ENCODE measurements at regions of chr20 and their contacts with region 1.

Region 1: DNA sequence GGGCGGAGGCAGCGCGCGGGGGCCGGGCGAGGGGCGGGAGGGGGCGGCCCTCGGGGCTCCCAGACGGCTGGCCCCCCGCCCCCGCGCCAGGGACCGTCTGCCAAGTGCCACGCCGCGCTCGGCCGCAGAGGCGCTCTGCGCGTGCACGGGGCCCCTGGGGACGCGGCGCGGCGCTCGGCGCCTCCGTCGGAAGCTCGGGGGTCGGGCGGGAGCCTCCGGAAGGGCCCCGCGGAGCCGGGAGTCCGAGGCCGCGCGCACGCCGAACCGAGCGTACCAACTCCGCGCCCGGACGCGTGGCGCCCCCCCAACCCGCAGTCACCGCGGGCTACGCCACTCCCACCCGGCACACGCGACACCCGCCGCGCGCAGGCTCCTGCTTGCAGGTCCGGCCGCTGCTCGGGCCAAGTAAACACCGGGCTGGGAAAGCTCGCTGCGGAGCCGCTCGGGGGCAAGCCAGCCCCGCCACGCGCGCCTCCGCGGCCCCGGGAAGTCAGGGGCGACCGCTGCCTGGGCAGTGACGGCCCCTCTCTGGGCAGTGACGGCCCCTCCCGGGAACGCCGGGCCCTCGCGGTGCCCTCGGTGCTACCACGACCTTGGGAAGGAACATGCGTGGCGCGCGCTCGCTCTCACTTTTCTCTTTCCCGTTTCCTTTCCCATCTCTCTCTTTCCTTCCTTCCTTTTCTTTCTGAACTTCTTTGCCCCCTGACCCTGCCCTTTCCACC is 384 bp upstream of the PREX1 start:
- DNase-seq: peak; percentile 26 to 83 (median 57)
- ATAC-seq: peak; percentile 88
- H3K4me3 ChIP-seq: peak overlapping the region; percentile 38
- H3K4me3 Mint-ChIP-seq: peak overlapping the region; percentile 75 to 87 (median 81)
- H3K27ac ChIP-seq: no peak overlapping the region
- H3K27ac Mint-ChIP-seq: peak overlapping the region in 8 of 9 donors; percentile 39 to 82 (median 64)
- H3K4me1 ChIP-seq: peaks cover 23 to 25% of the 10 kb centered on the region in 2 donors
- H3K4me1 Mint-ChIP-seq: peaks cover 16 to 42% (median 35%) of the 10 kb centered on the region in 7 donors
- H3K27me3 ChIP-seq: no peaks in the 10 kb centered on the region
- H3K27me3 Mint-ChIP-seq: peaks cover 4 to 21% (median 11%) of the 10 kb centered on the region in 5 donors

Region 2: GRCh38 chr20:48657475-48658470 is 170.4 kb before region 1 on chr20:
- CTCF ChIA-PET with region 1: no interaction called
- POLR2A ChIA-PET with region 1: no interaction called
- intact Hi-C with region 1: loop called (anchors 2 to 5 kb)
- DNase-seq: peak; percentile 33 to 73 (median 61)
- ATAC-seq: peak; percentile 94
- H3K4me3 ChIP-seq: no peak overlapping the region
- H3K4me3 Mint-ChIP-seq: no peak overlapping the region
- H3K27ac ChIP-seq: no peak overlapping the region
- H3K27ac Mint-ChIP-seq: peak overlapping the region in 2 of 9 donors; percentile 19 to 52
- H3K4me1 ChIP-seq: peaks cover 0 to 3% of the 10 kb centered on the region in 2 donors
- H3K4me1 Mint-ChIP-seq: peaks cover 0 to 10% (median 3%) of the 10 kb centered on the region in 7 donors
- H3K27me3 ChIP-seq: no peaks in the 10 kb centered on the region
- H3K27me3 Mint-ChIP-seq: no peaks in the 10 kb centered on the region

Region 3: GRCh38 chr20:48760403-48760983 is 67.7 kb before region 1 on chr20:
- CTCF ChIA-PET with region 1: no interaction called
- POLR2A ChIA-PET with region 1: interaction called, 3 read pairs
- intact Hi-C with region 1: loop called (anchors 1 to 2 kb)
- DNase-seq: peak in 8 of 9 donors; percentile 21 to 74 (median 62)
- ATAC-seq: peak; percentile 85
- H3K4me3 ChIP-seq: peak overlapping the region; percentile 48
- H3K4me3 Mint-ChIP-seq: peak overlapping the region in 9 of 10 donors; percentile 54 to 81 (median 70)
- H3K27ac ChIP-seq: peak overlapping the region; percentile 57
- H3K27ac Mint-ChIP-seq: peak overlapping the region; percentile 85 to 95 (median 93)
- H3K4me1 ChIP-seq: peaks cover 45 to 72% of the 10 kb centered on the region in 2 donors
- H3K4me1 Mint-ChIP-seq: peaks cover 38 to 86% (median 58%) of the 10 kb centered on the region in 7 donors
- H3K27me3 ChIP-seq: no peaks in the 10 kb centered on the region
- H3K27me3 Mint-ChIP-seq: no peaks in the 10 kb centered on the region

Region 4: DNA sequence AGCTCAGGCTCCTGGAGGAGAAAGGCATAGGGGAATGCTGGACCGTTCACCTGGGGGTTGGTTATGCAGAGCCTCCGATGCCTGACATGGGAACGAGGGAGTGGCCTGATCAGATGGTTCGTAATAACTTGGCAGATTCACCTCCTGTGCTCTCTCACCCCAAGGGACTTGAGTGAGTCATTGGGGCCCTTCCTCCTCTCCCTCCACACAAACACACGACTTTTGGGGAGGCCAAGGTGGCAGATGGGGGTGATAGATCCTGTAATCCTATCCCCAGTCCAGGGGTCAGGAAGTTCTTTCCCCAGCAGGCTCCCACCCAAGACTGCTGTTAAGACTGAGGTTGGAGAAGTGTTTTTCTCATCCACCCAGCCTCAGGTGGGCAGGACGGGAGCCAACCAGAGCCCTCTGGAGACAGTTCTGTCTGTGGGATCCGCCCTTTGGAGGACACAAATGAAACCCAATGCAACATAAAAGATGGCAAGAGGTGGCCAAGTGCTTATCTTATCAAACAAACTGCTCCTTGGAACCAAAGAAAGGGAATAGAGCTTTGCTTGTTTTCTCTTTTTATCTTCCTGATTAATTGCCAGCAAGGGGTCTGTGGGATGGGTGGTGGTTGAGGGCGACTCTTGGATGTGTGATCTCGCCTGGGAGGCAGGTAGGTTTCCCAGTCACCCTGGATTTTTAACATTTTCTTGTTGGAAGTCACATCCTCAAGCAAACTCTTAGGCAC is 47.9 kb after region 1 on chr20:
- CTCF ChIA-PET with region 1: no interaction called
- POLR2A ChIA-PET with region 1: no interaction called
- intact Hi-C with region 1: no loop called
- DNase-seq: no peak
- ATAC-seq: peak; percentile 60
- H3K4me3 ChIP-seq: no peak overlapping the region
- H3K4me3 Mint-ChIP-seq: no peak overlapping the region
- H3K27ac ChIP-seq: no peak overlapping the region
- H3K27ac Mint-ChIP-seq: no peak overlapping the region
- H3K4me1 ChIP-seq: peaks cover 4 to 6% of the 10 kb centered on the region in 2 donors
- H3K4me1 Mint-ChIP-seq: peaks cover 4 to 15% (median 10%) of the 10 kb centered on the region in 7 donors
- H3K27me3 ChIP-seq: no peaks in the 10 kb centered on the region
- H3K27me3 Mint-ChIP-seq: peaks cover 0 to 2% (median 0%) of the 10 kb centered on the region in 5 donors

Region 5: GRCh38 chr20:48904365-48905296 is 76.4 kb after region 1 on chr20:
- CTCF ChIA-PET with region 1: no interaction called
- POLR2A ChIA-PET with region 1: no interaction called
- intact Hi-C with region 1: loop called in 1 of 2 experiments (anchors 5 kb)
- DNase-seq: peak in 8 of 9 donors; percentile 8 to 62 (median 52)
- ATAC-seq: peak; percentile 86
- H3K4me3 ChIP-seq: no peak overlapping the region
- H3K4me3 Mint-ChIP-seq: no peak overlapping the region
- H3K27ac ChIP-seq: no peak overlapping the region
- H3K27ac Mint-ChIP-seq: peak overlapping the region in 1 of 9 donors; percentile 15
- H3K4me1 ChIP-seq: peaks cover 0 to 5% of the 10 kb centered on the region in 2 donors
- H3K4me1 Mint-ChIP-seq: peaks cover 0 to 15% (median 7%) of the 10 kb centered on the region in 7 donors
- H3K27me3 ChIP-seq: no peaks in the 10 kb centered on the region
- H3K27me3 Mint-ChIP-seq: peaks cover 0 to 14% (median 0%) of the 10 kb centered on the region in 5 donors

Region 6: DNA sequence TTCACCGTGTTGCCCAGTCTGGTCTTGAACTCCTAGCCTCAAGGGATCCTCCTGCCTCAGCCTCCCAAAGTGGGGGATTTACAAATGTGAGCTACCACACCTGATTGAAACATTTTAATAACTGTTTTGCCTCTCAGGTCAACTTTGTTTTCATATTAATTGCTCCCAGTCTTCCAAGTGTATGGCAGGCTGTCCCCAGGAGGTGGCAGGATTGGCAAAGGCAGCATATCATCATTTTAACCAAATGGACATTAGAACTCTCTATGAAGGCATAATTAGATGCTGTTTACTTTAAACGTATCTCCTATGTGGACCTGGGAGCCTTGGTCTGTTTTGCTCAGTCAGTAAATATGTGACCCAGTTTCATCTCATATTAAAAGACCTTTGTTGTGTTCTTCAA is 158.7 kb after region 1 on chr20:
- CTCF ChIA-PET with region 1: no interaction called
- POLR2A ChIA-PET with region 1: no interaction called
- intact Hi-C with region 1: no loop called
- DNase-seq: no peak
- ATAC-seq: no peak
- H3K4me3 ChIP-seq: no peak overlapping the region
- H3K4me3 Mint-ChIP-seq: no peak overlapping the region
- H3K27ac ChIP-seq: no peak overlapping the region
- H3K27ac Mint-ChIP-seq: no peak overlapping the region
- H3K4me1 ChIP-seq: no peaks in the 10 kb centered on the region
- H3K4me1 Mint-ChIP-seq: peaks cover 0 to 1% (median 0%) of the 10 kb centered on the region in 7 donors
- H3K27me3 ChIP-seq: no peaks in the 10 kb centered on the region
- H3K27me3 Mint-ChIP-seq: no peaks in the 10 kb centered on the region

Region 7: GRCh38 chr20:49713753-49714712 is 885.9 kb after region 1 on chr20 and contains the start of gene B4GALT5:
- CTCF ChIA-PET with region 1: no interaction called
- POLR2A ChIA-PET with region 1: no interaction called
- intact Hi-C with region 1: loop called in 1 of 2 experiments (anchors 5 kb)
- DNase-seq: peak in 8 of 9 donors; percentile 26 to 82 (median 47)
- ATAC-seq: peak; percentile 90
- H3K4me3 ChIP-seq: peak within 1 kb of the TSS; percentile 67
- H3K4me3 Mint-ChIP-seq: peak within 1 kb of the TSS; percentile 86 to 93 (median 90)
- H3K27ac ChIP-seq: peak within 1 kb of the TSS; percentile 66
- H3K27ac Mint-ChIP-seq: peak within 1 kb of the TSS; percentile 53 to 89 (median 81)
- H3K4me1 ChIP-seq: peaks cover 7 to 15% of the 10 kb centered on the region in 2 donors
- H3K4me1 Mint-ChIP-seq: peaks cover 26 to 43% (median 38%) of the 10 kb centered on the region in 7 donors
- H3K27me3 ChIP-seq: no peaks in the 10 kb centered on the region
- H3K27me3 Mint-ChIP-seq: peaks cover 0 to 4% (median 0%) of the 10 kb centered on the region in 5 donors
- total RNA-seq, gene B4GALT5: 3.3 to 23.1 (median 4.6) TPM

Measured in naive thymus-derived CD4-positive, alpha-beta T cell (primary cell).